ENCODE measurements at regions of chr16 and their contacts with region 1.

Region 1: GRCh38 chr16:67428146-67428731 is 2.7 kb upstream of the HSD11B2 start:
- DNase-seq: peak; percentile 33
- H3K4me3 Mint-ChIP-seq: no peak overlapping the region
- H3K27ac Mint-ChIP-seq: no peak overlapping the region
- H3K4me1 Mint-ChIP-seq: peaks cover 8% of the 10 kb centered on the region
- H3K27me3 Mint-ChIP-seq: peaks cover 45% of the 10 kb centered on the region

Region 2: GRCh38 chr16:67447508-67448076 is 19.4 kb after region 1 on chr16:
- intact Hi-C with region 1: loop called (anchors 1 kb)
- DNase-seq: peak; percentile 62
- H3K4me3 Mint-ChIP-seq: no peak overlapping the region
- H3K27ac Mint-ChIP-seq: no peak overlapping the region
- H3K4me1 Mint-ChIP-seq: peaks cover 7% of the 10 kb centered on the region
- H3K27me3 Mint-ChIP-seq: no peaks in the 10 kb centered on the region

Region 3: GRCh38 chr16:67457611-67458010 is 29.4 kb after region 1 on chr16:
- intact Hi-C with region 1: no loop called
- DNase-seq: no peak
- H3K4me3 Mint-ChIP-seq: no peak overlapping the region
- H3K27ac Mint-ChIP-seq: no peak overlapping the region
- H3K4me1 Mint-ChIP-seq: no peaks in the 10 kb centered on the region
- H3K27me3 Mint-ChIP-seq: no peaks in the 10 kb centered on the region

Region 4: DNA sequence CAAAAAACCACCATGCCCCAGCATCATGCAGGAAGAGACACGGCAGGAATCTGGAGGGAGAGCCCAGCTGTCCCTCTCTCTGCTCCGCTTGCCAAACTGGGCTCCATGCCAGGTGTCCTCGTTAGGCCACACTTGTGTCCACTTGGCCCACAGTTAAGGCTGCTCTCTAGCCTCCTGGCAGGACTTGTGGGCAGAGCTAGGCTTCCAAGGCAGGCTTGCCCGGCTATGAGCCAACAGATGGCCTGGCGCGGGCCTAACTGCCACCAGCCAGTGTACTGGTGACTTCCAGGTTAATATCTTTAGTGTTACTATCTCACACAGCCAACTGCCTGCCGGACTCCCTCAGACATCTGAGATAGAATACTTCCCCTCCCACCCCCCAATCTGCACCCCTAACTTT is 42.1 kb after region 1 on chr16:
- intact Hi-C with region 1: loop called (anchors 1 kb)
- DNase-seq: no peak
- H3K4me3 Mint-ChIP-seq: no peak overlapping the region
- H3K27ac Mint-ChIP-seq: no peak overlapping the region
- H3K4me1 Mint-ChIP-seq: peaks cover 7% of the 10 kb centered on the region
- H3K27me3 Mint-ChIP-seq: no peaks in the 10 kb centered on the region

Region 5: DNA sequence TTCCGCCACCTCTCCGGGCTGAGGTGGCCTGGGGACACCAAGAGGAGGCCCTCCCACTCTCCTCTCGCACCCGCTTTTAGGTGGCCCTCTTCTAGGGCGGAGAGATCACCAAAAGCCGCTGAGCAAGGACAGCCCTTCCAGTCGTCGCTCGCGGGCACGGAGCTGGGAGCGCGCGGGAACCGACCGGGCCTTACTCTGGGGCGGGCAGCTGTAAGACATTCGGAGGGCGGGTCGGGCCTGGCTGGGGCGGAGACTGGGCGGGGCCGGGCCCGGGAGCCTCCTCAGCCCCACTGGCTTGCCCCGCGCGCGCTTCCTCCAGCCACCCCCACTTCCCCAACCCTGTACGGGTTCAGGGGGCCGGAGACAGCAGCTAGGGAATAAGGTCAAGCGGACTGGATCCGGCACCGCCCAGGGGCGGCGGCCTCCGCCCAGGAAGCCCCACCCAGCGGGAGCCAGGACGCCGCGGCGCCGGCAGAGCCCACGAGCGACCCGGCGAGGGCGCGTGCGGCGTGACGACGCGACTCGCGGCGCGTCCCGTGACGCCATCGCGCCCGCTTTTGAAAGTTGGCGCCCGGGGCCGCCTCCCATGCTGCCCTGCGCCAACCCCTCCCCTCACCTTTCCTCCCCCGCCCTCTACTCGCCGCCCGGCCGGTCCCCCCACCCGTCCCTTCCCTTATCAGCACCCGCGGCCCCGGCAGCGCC is 133.7 kb after region 1 on chr16:
- intact Hi-C with region 1: no loop called
- DNase-seq: peak; percentile 98
- H3K4me3 Mint-ChIP-seq: peak overlapping the region; percentile 88
- H3K27ac Mint-ChIP-seq: peak overlapping the region; percentile 94
- H3K4me1 Mint-ChIP-seq: peaks cover 40% of the 10 kb centered on the region
- H3K27me3 Mint-ChIP-seq: no peaks in the 10 kb centered on the region